Caco-2 (cell line): ENCODE measurements at regions of chr12 and their contacts with region 1.

Region 1: DNA sequence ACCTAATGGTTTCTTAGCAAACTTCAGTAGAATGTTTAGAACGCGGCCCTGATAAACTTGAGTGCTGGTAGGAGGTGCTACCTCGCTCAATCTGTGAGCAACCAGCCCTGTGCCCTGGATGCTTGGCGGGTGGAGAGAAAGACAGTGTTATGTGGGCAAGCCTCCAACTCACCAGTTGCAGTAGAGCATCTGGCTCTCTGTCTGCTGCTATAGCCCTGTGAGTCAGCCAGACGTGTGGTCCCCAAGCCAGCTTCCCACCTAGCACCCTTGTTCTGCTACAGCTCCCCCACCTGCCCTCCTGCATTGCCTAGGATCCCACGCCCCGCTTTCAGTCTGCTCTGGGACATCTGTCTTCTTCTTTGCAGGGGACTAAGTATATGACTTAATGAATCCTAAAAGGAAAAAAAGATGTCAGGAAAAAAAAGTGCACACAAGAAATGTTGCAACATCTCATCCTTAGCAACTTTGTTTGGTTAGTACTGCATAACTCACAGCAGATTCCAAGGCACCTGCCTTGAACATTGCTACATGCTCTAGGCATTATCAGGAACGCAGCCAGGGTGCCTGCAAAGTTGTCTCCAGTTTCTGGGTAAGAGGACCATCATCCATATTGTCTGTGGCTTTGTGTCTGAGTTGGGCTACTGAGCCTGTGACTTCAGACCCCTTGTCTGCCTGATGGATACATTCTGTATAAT is 13.6 kb downstream of the SNRNP35 start:
- DNase-seq: peak; percentile 52 to 68
- H3K4me3 ChIP-seq: no peak overlapping the region
- H3K4me3 Mint-ChIP-seq: no peak overlapping the region
- H3K27ac Mint-ChIP-seq: peak overlapping the region; percentile 90
- H3K4me1 ChIP-seq: peaks cover 18% of the 10 kb centered on the region
- H3K4me1 Mint-ChIP-seq: peaks cover 25% of the 10 kb centered on the region
- H3K27me3 ChIP-seq: no peaks in the 10 kb centered on the region
- H3K27me3 Mint-ChIP-seq: no peaks in the 10 kb centered on the region
- CTCF ChIP-seq: no peak

Region 2: DNA sequence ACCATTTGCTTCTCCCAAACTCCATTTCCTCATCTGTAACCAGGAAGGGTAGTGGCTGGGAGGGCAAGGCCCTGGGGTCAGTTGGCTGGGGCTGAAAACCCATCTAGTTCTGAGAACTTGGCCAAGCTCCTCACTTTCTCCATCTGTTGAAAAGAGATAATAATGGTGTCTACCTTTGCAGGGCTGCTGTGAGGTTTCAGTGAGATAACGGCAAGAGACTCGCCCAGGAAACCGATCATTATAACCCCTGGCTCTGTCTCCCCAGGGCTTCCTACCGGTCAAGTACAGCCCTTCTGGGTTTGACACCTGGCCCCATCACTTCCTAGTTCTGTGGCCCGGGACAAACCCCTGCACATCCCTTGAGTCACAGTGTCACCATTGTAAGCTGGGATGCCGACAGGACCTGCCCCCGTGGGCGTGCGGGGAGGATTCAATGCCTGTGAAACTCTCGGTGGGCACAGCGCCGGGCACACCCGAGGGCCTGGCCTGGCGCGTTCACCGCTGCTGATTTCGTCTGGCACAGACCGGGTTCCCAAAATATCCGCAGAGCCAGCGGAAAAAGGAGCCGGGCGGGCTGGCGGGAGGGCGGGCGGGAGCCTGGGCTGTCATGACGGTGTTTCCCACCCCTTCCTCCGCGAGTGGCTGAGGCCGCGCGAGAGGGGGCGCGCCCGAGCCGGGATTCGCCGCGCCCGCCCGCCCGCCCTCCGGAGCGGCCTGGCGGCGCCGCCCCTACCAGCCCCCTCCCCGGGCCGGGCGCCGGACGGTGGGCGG is 83.2 kb before region 1 on chr12:
- CTCF ChIA-PET with region 1: no interaction called
- POLR2A ChIA-PET with region 1: no interaction called
- intact Hi-C with region 1: no loop called
- DNase-seq: peak; percentile 67 to 87
- H3K4me3 ChIP-seq: peak overlapping the region; percentile 88
- H3K4me3 Mint-ChIP-seq: peak overlapping the region; percentile 75
- H3K27ac Mint-ChIP-seq: peak overlapping the region; percentile 66
- H3K4me1 ChIP-seq: peaks cover 4% of the 10 kb centered on the region; the same call in 1 of the 2 replicates
- H3K4me1 Mint-ChIP-seq: peaks cover 21% of the 10 kb centered on the region
- H3K27me3 ChIP-seq: no peaks in the 10 kb centered on the region
- H3K27me3 Mint-ChIP-seq: no peaks in the 10 kb centered on the region
- CTCF ChIP-seq: peak in 1 of 2 experiments; percentile 5

Region 3: DNA sequence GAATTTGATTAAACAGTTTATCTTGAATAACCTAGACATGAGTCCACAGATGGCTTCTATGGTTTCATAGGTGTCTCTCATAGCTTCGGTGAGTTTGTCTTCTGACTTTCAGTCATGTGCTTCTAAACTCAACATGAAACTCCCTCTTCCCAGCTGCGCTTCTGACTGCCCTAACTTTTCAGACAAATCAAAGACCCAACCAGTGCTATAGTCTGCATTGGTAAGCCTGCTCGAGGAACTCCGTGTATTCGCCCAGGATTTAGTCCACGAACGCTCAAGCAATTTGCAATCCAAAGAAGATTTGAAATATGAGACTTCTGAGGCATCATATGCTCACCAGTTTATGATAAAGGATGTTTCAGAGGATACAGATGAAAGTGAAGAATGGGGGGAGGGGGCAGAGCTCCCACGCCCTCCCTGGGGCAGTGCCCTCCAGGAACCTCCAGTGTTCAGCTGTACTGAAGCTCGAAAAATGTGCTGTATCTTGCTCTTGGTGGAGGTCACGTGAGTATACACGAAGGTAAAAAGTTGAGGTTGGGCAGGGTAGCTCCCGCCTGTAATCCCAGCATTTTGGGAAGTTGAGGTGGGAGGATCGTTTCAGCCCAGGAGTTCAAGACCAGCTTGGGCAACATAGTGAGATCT is 29.9 kb before region 1 on chr12:
- CTCF ChIA-PET with region 1: no interaction called
- POLR2A ChIA-PET with region 1: no interaction called
- intact Hi-C with region 1: no loop called
- DNase-seq: no peak
- H3K4me3 ChIP-seq: no peak overlapping the region
- H3K4me3 Mint-ChIP-seq: no peak overlapping the region
- H3K27ac Mint-ChIP-seq: no peak overlapping the region
- H3K4me1 ChIP-seq: no peaks in the 10 kb centered on the region; the same call in 1 of the 2 replicates
- H3K4me1 Mint-ChIP-seq: no peaks in the 10 kb centered on the region
- H3K27me3 ChIP-seq: no peaks in the 10 kb centered on the region
- H3K27me3 Mint-ChIP-seq: no peaks in the 10 kb centered on the region
- CTCF ChIP-seq: no peak

Region 4: GRCh38 chr12:123533672-123534643 is 62.4 kb after region 1 on chr12 and contains the start of gene RILPL1:
- CTCF ChIA-PET with region 1: interaction called, 5 read pairs
- POLR2A ChIA-PET with region 1: no interaction called
- intact Hi-C with region 1: loop called (anchors 5 kb)
- DNase-seq: peak; percentile 83 to 84
- H3K4me3 ChIP-seq: peak within 1 kb of the TSS; percentile 99
- H3K4me3 Mint-ChIP-seq: peak within 1 kb of the TSS; percentile 86
- H3K27ac Mint-ChIP-seq: peak within 1 kb of the TSS; percentile 84
- H3K4me1 ChIP-seq: peaks cover 12% of the 10 kb centered on the region
- H3K4me1 Mint-ChIP-seq: peaks cover 2% of the 10 kb centered on the region
- H3K27me3 ChIP-seq: no peaks in the 10 kb centered on the region
- H3K27me3 Mint-ChIP-seq: no peaks in the 10 kb centered on the region
- CTCF ChIP-seq: peak; percentile 11 to 18
- total RNA-seq, gene RILPL1: 16.2 and 17.0 TPM in 2 replicates